ENCODE measurements at regions of chr17 and their contacts with region 1.

Region 1: DNA sequence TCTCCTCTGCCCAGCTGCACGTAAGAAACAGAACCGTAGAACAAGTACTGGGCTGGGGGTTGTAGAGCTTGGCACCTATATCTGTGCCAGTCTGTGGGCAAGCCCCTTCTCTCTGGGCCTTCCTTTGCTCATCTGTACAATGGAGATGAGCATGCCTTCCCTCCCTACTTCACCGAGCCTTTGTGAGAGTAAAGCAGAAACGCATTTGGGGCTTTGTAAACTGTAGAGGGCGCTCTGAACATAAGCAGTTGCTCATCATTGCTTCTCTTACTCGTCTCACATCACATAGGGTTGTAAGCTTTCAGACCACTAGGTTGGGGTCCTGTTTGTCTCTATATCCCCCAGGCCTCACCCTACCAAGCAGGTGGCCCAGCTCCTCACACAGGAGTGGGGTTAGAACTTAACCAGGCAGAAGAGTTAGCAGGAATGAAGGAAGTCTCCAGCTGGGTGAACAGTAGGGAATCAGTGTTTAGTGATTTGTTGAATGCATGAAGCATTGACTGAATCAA is 15.1 kb downstream of the SAMD14 start:
- DNase-seq: peak; percentile 77
- ATAC-seq: peak; percentile 23
- H3K4me3 ChIP-seq: no peak overlapping the region
- H3K27ac ChIP-seq: no peak overlapping the region
- H3K4me1 ChIP-seq: peaks cover 77% of the 10 kb centered on the region
- H3K27me3 ChIP-seq: peaks cover 0 to 33% of the 10 kb centered on the region in 2 experiments; a peak in 3 of 5 replicates
- CTCF ChIP-seq: peak; percentile 88
- EP300 ChIP-seq: no peak
- POLR2A ChIP-seq: no peak
- RAD21 ChIP-seq: peak; percentile 63

Region 2: GRCh38 chr17:50079334-50080095 is 35.4 kb before region 1 on chr17:
- CTCF ChIA-PET with region 1: no interaction called
- POLR2A ChIA-PET with region 1: no interaction called
- in situ Hi-C with region 1: no loop called
- intact Hi-C with region 1: no loop called
- DNase-seq: peak; percentile 75
- ATAC-seq: peak; percentile 92
- H3K4me3 ChIP-seq: no peak overlapping the region
- H3K27ac ChIP-seq: no peak overlapping the region
- H3K4me1 ChIP-seq: no peaks in the 10 kb centered on the region
- H3K27me3 ChIP-seq: peaks cover 0 to 13% of the 10 kb centered on the region in 2 experiments; a peak in 1 of 5 replicates
- CTCF ChIP-seq: peak; percentile 96
- EP300 ChIP-seq: no peak
- POLR2A ChIP-seq: no peak
- RAD21 ChIP-seq: peak; percentile 90

Region 3: DNA sequence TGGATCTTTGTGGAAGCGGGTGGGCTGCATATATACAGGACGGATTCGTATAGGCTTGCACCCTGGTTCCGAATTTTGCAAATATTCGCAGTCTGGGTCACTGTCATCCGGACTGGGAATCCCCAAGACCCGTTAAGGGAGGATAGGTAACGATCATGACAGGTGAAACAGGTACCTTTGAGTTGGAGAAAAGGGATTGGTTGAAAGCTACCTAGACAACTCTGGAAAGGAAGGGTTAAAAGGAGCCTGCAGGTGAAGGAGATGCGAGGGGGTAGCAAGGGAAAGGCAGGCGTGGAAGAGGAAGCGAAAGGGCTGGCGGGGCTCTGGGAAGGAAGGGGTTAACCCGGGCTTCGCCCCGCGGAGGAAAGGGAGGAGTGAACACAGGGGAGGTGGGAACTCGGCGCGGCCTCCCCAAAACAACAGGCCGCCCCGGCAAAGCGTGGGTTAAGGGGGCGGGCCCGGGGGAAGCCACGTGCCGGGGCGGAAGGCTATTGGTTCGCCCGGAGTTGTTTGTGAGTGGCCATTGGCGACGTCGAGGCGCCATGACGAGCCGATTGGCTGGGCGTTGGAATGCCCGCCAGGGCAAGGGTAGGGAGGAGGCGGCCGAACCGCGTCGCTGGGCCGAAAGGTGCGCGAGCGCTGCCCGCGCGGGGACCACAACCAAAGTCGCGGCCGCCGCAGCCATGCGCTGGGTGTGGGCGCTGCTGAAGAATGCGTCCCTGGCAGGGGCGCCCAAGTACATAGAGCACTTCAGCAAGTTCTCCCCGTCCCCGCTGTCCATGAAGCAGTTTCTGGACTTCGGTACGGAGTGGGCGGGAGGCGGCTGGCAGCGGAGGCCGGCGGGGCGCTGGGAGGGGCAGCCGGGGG is 19.9 kb before region 1 on chr17 and contains the start of gene PDK2:
- CTCF ChIA-PET with region 1: interaction called, 15 read pairs
- POLR2A ChIA-PET with region 1: interaction called, 10 read pairs
- in situ Hi-C with region 1: no loop called
- intact Hi-C with region 1: loop called (anchors 2 kb)
- DNase-seq: peak; percentile 95
- ATAC-seq: peak; percentile 96
- H3K4me3 ChIP-seq: peak within 1 kb of the TSS; percentile 84 to 88 (median 87)
- H3K27ac ChIP-seq: peak within 1 kb of the TSS; percentile 67
- H3K4me1 ChIP-seq: peaks cover 21% of the 10 kb centered on the region
- H3K27me3 ChIP-seq: peaks cover 3 to 20% of the 10 kb centered on the region in 2 experiments; a peak in 4 of 5 replicates
- CTCF ChIP-seq: no peak
- EP300 ChIP-seq: no peak; a peak in 1 of 4 replicates
- POLR2A ChIP-seq: peak; percentile 58 to 65
- RAD21 ChIP-seq: no peak; the same call in 1 of the 2 replicates
- total RNA-seq, gene PDK2: 18.5 and 19.2 TPM in 2 replicates

Region 4: GRCh38 chr17:50101346-50102163 is 13.3 kb before region 1 on chr17:
- CTCF ChIA-PET with region 1: no interaction called
- POLR2A ChIA-PET with region 1: interaction called, 32 read pairs
- in situ Hi-C with region 1: no loop called
- intact Hi-C with region 1: no loop called
- DNase-seq: no peak
- ATAC-seq: peak; percentile 78
- H3K4me3 ChIP-seq: peak overlapping the region in 2 of 3 experiments; percentile 27 to 49; a peak in 4 of 6 replicates
- H3K27ac ChIP-seq: peak overlapping the region; percentile 68
- H3K4me1 ChIP-seq: peaks cover 40% of the 10 kb centered on the region
- H3K27me3 ChIP-seq: no peaks in the 10 kb centered on the region
- CTCF ChIP-seq: no peak
- EP300 ChIP-seq: no peak
- POLR2A ChIP-seq: 0 out of 4 replicates have a peak, but pooled peaks of 1 of the 2 experiments have one; percentile 17
- RAD21 ChIP-seq: no peak

Region 5: GRCh38 chr17:50161023-50161910 is 46.4 kb after region 1 on chr17:
- CTCF ChIA-PET with region 1: interaction called, 7 read pairs
- POLR2A ChIA-PET with region 1: no interaction called
- in situ Hi-C with region 1: loop called (anchors 5 kb)
- intact Hi-C with region 1: loop called (anchors 1 kb)
- DNase-seq: peak; percentile 78
- ATAC-seq: peak; percentile 95
- H3K4me3 ChIP-seq: peak overlapping the region; percentile 19 to 68 (median 42)
- H3K27ac ChIP-seq: no peak overlapping the region
- H3K4me1 ChIP-seq: peaks cover 15% of the 10 kb centered on the region
- H3K27me3 ChIP-seq: peaks cover 8 to 60% of the 10 kb centered on the region in 2 experiments; a peak in 3 of 5 replicates
- CTCF ChIP-seq: peak; percentile 100
- EP300 ChIP-seq: no peak
- POLR2A ChIP-seq: no peak
- RAD21 ChIP-seq: peak; percentile 97

Region 6: DNA sequence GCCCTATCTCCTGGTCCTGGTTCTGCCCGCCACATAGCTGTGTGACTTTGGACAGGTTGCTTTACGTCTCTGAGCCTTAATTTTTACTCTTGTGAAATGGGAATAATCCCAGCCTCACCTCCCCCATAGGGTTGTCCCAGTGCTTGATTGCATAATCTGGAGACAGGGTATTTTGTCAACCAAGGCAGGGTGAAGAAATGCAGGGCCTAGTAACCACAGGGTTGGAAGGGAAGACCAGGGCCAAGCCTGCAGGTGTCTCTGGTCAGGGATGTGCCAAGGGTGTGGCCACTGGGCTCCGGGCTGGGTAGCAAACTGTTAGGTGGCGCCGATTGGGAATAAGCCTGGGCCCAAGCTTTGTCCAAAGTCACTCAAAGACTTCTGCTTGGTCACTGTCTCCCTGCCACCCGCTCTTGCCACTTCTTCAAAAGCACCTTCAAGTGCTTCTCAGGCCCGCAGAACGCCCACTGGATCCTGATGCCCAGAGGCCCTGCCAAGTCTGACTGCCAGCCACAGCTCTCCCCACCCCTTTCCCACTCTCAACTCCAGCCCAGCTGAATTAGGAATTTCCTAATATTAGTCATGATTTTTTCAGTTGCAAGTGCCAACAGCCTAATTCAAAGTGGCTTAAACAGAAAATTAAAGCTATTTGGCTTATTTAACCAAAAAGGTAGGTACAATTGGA is 107.1 kb after region 1 on chr17:
- CTCF ChIA-PET with region 1: no interaction called
- POLR2A ChIA-PET with region 1: no interaction called
- in situ Hi-C with region 1: no loop called
- intact Hi-C with region 1: no loop called
- DNase-seq: no peak
- ATAC-seq: no peak
- H3K4me3 ChIP-seq: no peak overlapping the region
- H3K27ac ChIP-seq: no peak overlapping the region
- H3K4me1 ChIP-seq: peaks cover 40% of the 10 kb centered on the region
- H3K27me3 ChIP-seq: no peaks in the 10 kb centered on the region
- CTCF ChIP-seq: no peak
- EP300 ChIP-seq: no peak
- POLR2A ChIP-seq: no peak
- RAD21 ChIP-seq: no peak